Activated CD8-positive, alpha-beta T cell treated with anti-CD3 and anti-CD28 coated beads, Interleukin-2, amount 10 ng/mL, durations not matched to agents 7 days and 5 days (primary cell): ENCODE measurements at regions of chr16 and their contacts with region 1.

Region 1: GRCh38 chr16:28211712-28212534 is at the start of gene XPO6:
- DNase-seq: peak; percentile 99
- ATAC-seq: peak; percentile 84
- H3K4me3 Mint-ChIP-seq: peak within 1 kb of the TSS; percentile 89
- H3K27ac Mint-ChIP-seq: peak within 1 kb of the TSS; percentile 99
- H3K4me1 Mint-ChIP-seq: peaks cover 33% of the 10 kb centered on the region
- H3K27me3 Mint-ChIP-seq: no peaks in the 10 kb centered on the region
- total RNA-seq, gene XPO6: 206 to 209 TPM

Region 2: GRCh38 chr16:27906883-27907282 is 305.0 kb before region 1 on chr16:
- CTCF ChIA-PET with region 1: no interaction called
- POLR2A ChIA-PET with region 1: no interaction called
- DNase-seq: no peak
- ATAC-seq: no peak
- H3K4me3 Mint-ChIP-seq: no peak overlapping the region
- H3K27ac Mint-ChIP-seq: no peak overlapping the region
- H3K4me1 Mint-ChIP-seq: no peaks in the 10 kb centered on the region
- H3K27me3 Mint-ChIP-seq: peaks cover 2% of the 10 kb centered on the region

Region 3: DNA sequence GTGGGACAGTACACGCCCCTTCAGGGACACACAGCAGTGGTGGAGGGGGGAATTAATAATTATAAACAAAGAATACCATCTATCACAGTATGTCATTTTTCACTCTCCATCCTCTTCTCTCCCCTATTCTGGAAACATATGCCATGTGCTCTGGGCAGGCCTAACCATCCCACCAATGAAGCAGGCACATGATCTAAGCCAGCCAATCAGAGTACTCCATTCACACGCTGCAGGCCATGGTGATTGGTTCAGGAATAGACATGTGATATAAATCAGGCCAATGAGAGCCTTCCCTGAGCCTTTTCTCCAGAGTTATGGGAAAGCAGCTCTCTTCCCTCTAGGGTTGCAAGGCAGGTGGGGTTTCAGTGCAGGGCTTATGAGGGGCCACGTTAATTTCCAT is 184.9 kb before region 1 on chr16:
- CTCF ChIA-PET with region 1: no interaction called
- POLR2A ChIA-PET with region 1: no interaction called
- DNase-seq: no peak
- ATAC-seq: no peak
- H3K4me3 Mint-ChIP-seq: no peak overlapping the region
- H3K27ac Mint-ChIP-seq: no peak overlapping the region
- H3K4me1 Mint-ChIP-seq: no peaks in the 10 kb centered on the region
- H3K27me3 Mint-ChIP-seq: peaks cover 2% of the 10 kb centered on the region

Region 4: GRCh38 chr16:28140788-28141618 is 70.9 kb before region 1 on chr16:
- CTCF ChIA-PET with region 1: interaction called, 275 read pairs
- POLR2A ChIA-PET with region 1: interaction called, 45 read pairs
- DNase-seq: peak; percentile 88
- ATAC-seq: peak; percentile 66
- H3K4me3 Mint-ChIP-seq: peak overlapping the region; percentile 71
- H3K27ac Mint-ChIP-seq: peak overlapping the region; percentile 95
- H3K4me1 Mint-ChIP-seq: peaks cover 89% of the 10 kb centered on the region
- H3K27me3 Mint-ChIP-seq: no peaks in the 10 kb centered on the region

Region 5: DNA sequence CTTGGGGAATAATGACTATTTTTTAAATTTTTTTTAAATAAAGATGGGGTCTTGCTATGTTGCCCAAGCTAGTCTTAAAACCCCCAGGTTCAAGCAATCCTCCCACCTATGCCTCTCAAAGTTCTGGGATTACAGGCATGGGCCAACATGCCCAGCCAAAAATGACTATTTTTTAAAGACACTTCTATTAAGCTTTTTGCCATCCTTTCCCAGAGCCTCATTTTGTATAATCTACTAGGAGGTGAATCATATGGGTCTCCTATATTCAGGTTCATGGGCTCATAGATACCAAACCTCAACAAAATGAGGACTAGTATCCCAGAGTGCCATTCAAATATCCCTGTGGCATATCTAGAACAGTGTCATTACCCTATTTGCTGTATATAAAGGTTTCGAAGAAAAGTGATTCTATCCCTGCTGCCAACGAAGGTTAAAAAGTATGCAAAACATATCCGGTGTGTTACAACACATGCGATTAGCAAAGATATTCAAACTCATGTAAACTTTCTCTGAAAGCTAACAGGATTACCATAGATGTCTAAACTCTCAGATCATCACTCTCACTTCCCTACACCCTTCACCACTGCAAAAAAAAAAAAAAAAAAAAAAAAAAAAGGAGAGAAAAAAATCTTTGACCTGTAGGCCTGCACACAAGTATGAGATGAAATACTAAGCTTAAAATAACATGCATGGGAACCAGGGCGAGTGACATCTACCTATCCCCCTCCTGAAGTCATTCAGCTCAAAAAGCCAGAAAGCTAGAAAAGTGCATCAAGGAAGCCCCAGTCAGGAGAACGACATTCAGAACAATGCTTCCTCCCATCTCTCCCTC is 23.6 kb before region 1 on chr16:
- CTCF ChIA-PET with region 1: interaction called, 69 read pairs
- POLR2A ChIA-PET with region 1: interaction called, 135 read pairs
- DNase-seq: no peak
- ATAC-seq: no peak
- H3K4me3 Mint-ChIP-seq: peak overlapping the region; percentile 66
- H3K27ac Mint-ChIP-seq: peak overlapping the region; percentile 82
- H3K4me1 Mint-ChIP-seq: peaks cover 89% of the 10 kb centered on the region
- H3K27me3 Mint-ChIP-seq: no peaks in the 10 kb centered on the region

Region 6: DNA sequence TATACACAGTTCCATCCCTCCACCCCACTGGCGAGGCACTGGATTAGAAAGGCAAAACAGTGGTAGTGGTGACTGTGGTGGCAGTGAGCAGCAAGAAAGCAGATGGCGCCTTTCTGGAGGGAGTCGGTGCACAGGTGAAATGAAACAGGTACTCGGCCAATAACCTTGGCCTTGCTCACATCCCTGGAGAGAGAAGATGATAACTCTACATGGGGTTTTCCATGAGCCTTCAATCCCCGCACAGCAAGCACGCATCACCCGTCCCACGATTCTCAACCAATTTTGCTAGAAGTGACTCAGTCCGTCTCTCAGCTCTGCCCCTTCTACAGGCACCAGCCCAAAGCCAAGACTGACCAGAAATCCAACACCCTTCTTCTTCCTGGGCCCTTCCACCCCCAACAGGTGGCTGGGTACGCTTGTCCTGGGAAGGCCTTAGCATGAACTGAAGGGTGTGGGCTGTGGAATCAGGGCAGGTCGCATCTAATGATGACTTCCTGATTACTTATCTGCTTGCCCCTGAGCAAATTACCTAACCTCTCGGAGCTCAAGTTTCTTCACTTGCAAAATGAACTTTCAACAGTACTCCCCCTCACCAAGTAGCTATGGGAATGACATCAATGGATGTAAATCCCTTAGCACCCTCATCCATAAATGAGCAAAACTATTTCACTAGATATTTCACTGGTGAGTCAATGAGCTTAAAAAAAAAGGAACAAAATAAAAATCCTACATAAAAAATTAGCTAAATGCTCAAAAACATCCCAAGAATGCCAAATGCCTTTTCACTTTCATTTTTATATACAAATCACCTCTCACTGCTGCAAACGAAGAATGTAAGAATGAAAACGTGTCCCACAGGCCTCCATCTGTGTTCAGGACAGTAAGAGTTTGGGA is 18.1 kb before region 1 on chr16:
- CTCF ChIA-PET with region 1: interaction called, 69 read pairs
- POLR2A ChIA-PET with region 1: interaction called, 135 read pairs
- DNase-seq: no peak
- ATAC-seq: peak; percentile 52
- H3K4me3 Mint-ChIP-seq: peak overlapping the region; percentile 78
- H3K27ac Mint-ChIP-seq: peak overlapping the region; percentile 93
- H3K4me1 Mint-ChIP-seq: peaks cover 79% of the 10 kb centered on the region
- H3K27me3 Mint-ChIP-seq: no peaks in the 10 kb centered on the region

Region 7: DNA sequence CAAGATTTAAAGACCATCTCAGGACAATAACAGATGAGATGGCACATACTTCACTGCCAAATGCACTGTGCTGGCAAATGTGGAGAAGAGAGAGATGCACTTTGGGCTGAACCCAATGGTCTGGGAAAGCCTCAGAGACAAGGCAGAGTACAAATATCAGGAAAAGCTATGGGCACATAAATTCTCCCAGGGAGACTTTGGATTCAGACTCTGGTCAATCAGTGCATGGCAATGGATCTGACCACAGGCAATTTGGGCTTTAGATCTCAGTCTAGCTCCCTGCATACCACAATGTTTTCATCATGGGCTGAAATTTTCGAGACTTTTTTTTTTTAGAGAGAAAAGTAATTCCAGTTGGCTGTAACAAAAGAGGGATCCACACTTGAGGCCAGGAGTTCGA is 19.8 kb after region 1 on chr16:
- CTCF ChIA-PET with region 1: no interaction called
- POLR2A ChIA-PET with region 1: no interaction called
- DNase-seq: no peak
- ATAC-seq: no peak
- H3K4me3 Mint-ChIP-seq: no peak overlapping the region
- H3K27ac Mint-ChIP-seq: no peak overlapping the region
- H3K4me1 Mint-ChIP-seq: no peaks in the 10 kb centered on the region
- H3K27me3 Mint-ChIP-seq: no peaks in the 10 kb centered on the region